Cardiac septum (tissue), 1 donor: ENCODE measurements at regions of chr16 and their contacts with region 1.

Region 1: GRCh38 chr16:66902648-66903543 is 15.8 kb downstream of the CDH16 start:
- DNase-seq: peak; percentile 87

Region 2: GRCh38 chr16:66858740-66859396 is 44.0 kb before region 1 on chr16:
- intact Hi-C with region 1: no loop called
- DNase-seq: peak; percentile 82

Region 3: GRCh38 chr16:66926961-66927436 is 24.1 kb after region 1 on chr16:
- intact Hi-C with region 1: loop called (anchors 1 kb)
- DNase-seq: no peak

Region 4: GRCh38 chr16:67183627-67184328 is 280.9 kb after region 1 on chr16 and contains the start of gene MATCAP1:
- intact Hi-C with region 1: no loop called
- DNase-seq: peak; percentile 96
- total RNA-seq, gene MATCAP1: 22.2 TPM